Natural killer cell (primary cell): ENCODE measurements at regions of chr5 and their contacts with region 1.

Region 1: GRCh38 chr5:178732281-178732680 is 1.8 kb upstream of the ZNF354A start:
- DNase-seq: no peak
- ATAC-seq: no peak
- H3K4me3 ChIP-seq: no peak overlapping the region
- H3K4me3 Mint-ChIP-seq: no peak overlapping the region
- H3K27ac ChIP-seq: no peak overlapping the region
- H3K27ac Mint-ChIP-seq: no peak overlapping the region
- H3K4me1 ChIP-seq: peaks cover 12% of the 10 kb centered on the region
- H3K4me1 Mint-ChIP-seq: peaks cover 5 to 14% of the 10 kb centered on the region in 2 donors
- H3K27me3 ChIP-seq: no peaks in the 10 kb centered on the region
- H3K27me3 Mint-ChIP-seq: peaks cover 9 to 17% of the 10 kb centered on the region in 2 donors
- CTCF ChIP-seq: no peak

Region 2: DNA sequence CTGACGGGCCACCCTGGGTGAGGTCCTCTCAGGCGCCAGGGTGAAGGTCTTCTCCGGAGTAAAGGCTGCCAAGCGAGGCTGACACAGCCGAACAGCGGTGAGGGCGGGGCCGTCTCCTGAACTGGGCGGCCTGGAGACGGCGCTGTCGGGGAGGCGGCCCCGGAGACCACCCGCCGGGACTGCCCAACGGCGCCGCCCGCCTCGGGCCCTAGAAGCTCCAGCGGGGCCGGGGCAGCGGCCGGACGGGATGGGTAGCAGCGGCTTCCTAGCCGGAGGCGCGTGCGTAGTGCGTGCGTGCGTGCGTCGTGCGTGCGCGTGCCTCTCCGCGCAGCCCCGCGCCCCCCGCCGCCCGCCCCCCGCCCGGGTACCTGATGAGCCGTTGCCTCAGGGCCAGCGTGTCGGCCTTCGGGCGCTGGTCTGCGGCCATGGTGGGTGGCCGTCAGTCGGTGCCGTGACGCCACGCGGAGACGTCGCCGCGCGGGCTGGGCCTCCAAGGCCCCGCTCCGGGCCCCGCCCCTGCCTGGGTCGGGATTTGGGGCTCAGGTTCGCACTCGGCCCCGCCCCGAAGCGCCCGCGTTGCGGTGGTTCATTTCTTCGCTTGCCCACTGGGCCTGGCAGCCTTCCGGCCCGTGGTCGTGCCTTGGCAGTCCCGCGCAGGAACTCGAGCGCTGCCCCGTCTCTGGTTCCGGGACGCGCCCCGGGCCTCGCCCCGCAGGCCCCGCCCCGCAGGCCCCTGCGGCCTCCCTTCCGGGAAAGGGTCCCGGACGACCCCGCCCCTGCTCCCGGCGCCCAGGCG is 500.0 kb before region 1 on chr5 and contains the start of gene PHYKPL:
- intact Hi-C with region 1: loop called (anchors 10 kb)
- DNase-seq: peak; percentile 54 to 81
- ATAC-seq: peak; percentile 67 to 79 (median 70)
- H3K4me3 ChIP-seq: peak within 1 kb of the TSS; percentile 70
- H3K4me3 Mint-ChIP-seq: peak within 1 kb of the TSS; percentile 87
- H3K27ac ChIP-seq: peak within 1 kb of the TSS; percentile 75
- H3K27ac Mint-ChIP-seq: peak within 1 kb of the TSS; percentile 70 to 77
- H3K4me1 ChIP-seq: peaks cover 60% of the 10 kb centered on the region
- H3K4me1 Mint-ChIP-seq: peaks cover 67 to 68% of the 10 kb centered on the region in 2 donors
- H3K27me3 ChIP-seq: no peaks in the 10 kb centered on the region
- H3K27me3 Mint-ChIP-seq: no peaks in the 10 kb centered on the region
- CTCF ChIP-seq: no peak
- total RNA-seq, gene PHYKPL: 111 to 134 (median 131) TPM

Region 3: GRCh38 chr5:178626484-178627258 is 105.6 kb before region 1 on chr5 and contains the start of gene CLK4:
- intact Hi-C with region 1: loop called (anchors 1 kb)
- DNase-seq: peak; percentile 98
- ATAC-seq: peak; percentile 88 to 98 (median 91)
- H3K4me3 ChIP-seq: peak within 1 kb of the TSS; percentile 71
- H3K4me3 Mint-ChIP-seq: peak within 1 kb of the TSS; percentile 99
- H3K27ac ChIP-seq: peak within 1 kb of the TSS; percentile 99
- H3K27ac Mint-ChIP-seq: peak within 1 kb of the TSS; percentile 98 to 100
- H3K4me1 ChIP-seq: peaks cover 15% of the 10 kb centered on the region
- H3K4me1 Mint-ChIP-seq: peaks cover 38 to 39% of the 10 kb centered on the region in 2 donors
- H3K27me3 ChIP-seq: no peaks in the 10 kb centered on the region
- H3K27me3 Mint-ChIP-seq: no peaks in the 10 kb centered on the region
- CTCF ChIP-seq: no peak
- total RNA-seq, gene CLK4: 71.2 to 81.8 (median 78.0) TPM

Region 4: GRCh38 chr5:178699681-178700253 is 32.5 kb before region 1 on chr5:
- intact Hi-C with region 1: no loop called
- DNase-seq: no peak
- ATAC-seq: no peak
- H3K4me3 ChIP-seq: no peak overlapping the region
- H3K4me3 Mint-ChIP-seq: no peak overlapping the region
- H3K27ac ChIP-seq: no peak overlapping the region
- H3K27ac Mint-ChIP-seq: no peak overlapping the region
- H3K4me1 ChIP-seq: no peaks in the 10 kb centered on the region
- H3K4me1 Mint-ChIP-seq: no peaks in the 10 kb centered on the region
- H3K27me3 ChIP-seq: no peaks in the 10 kb centered on the region
- H3K27me3 Mint-ChIP-seq: peaks cover 0 to 8% of the 10 kb centered on the region in 2 donors
- CTCF ChIP-seq: no peak

Region 5: DNA sequence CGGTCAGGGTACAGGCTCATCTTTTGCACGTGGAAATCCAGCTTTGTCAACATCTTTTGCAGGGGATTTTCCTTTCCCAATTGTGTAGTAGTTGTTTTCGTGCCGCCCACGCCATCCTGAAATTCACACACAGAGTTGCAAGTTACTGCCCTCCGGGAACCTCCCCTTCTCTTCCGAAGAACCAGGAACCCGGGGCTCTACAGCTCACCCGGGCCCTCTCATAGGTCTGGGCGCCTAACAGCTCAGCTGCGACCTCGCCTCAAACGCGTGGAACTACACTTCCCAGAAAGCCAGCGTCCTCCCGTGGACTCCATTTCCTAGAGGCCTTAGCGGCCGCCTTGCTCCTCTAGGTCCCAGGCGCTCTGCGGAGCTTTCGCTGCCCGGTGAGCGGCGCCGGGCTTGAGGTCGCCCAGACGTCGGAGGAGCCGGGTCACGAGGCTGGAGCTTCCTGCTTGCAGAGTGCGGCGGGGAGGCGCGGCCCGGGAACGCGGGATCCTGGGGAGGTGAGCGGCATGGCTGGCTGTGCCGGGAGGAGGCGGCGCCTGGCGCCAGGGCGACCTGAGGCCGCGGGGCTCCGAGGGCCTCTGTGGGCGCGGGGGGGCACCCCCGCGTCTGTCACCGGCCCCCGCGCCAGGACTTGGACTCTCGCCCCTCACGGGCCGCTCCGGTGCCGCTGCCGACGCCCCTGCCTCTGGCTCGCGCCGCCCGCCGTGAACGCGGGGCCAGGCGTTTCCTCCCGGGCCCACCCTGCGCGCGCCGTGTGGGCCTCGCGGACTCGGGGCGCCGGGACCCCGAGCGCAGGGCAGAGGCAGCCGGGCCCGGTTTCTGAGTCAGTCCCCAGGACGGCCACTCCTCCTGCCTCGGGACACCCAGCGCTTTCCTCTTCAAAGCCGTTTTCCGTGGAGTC is 127.6 kb after region 1 on chr5 and contains the start of gene ZNF354B:
- intact Hi-C with region 1: loop called (anchors 1 kb)
- DNase-seq: peak; percentile 61 to 92
- ATAC-seq: peak; percentile 90 to 96 (median 95)
- H3K4me3 ChIP-seq: peak within 1 kb of the TSS; percentile 52
- H3K4me3 Mint-ChIP-seq: peak within 1 kb of the TSS; percentile 92
- H3K27ac ChIP-seq: peak within 1 kb of the TSS; percentile 20
- H3K27ac Mint-ChIP-seq: peak within 1 kb of the TSS; percentile 80 to 90
- H3K4me1 ChIP-seq: peaks cover 3% of the 10 kb centered on the region
- H3K4me1 Mint-ChIP-seq: peaks cover 32% of the 10 kb centered on the region in 2 donors
- H3K27me3 ChIP-seq: no peaks in the 10 kb centered on the region
- H3K27me3 Mint-ChIP-seq: no peaks in the 10 kb centered on the region
- CTCF ChIP-seq: no peak
- total RNA-seq, gene ZNF354B: 10.0 to 16.0 (median 13.6) TPM

Region 6: DNA sequence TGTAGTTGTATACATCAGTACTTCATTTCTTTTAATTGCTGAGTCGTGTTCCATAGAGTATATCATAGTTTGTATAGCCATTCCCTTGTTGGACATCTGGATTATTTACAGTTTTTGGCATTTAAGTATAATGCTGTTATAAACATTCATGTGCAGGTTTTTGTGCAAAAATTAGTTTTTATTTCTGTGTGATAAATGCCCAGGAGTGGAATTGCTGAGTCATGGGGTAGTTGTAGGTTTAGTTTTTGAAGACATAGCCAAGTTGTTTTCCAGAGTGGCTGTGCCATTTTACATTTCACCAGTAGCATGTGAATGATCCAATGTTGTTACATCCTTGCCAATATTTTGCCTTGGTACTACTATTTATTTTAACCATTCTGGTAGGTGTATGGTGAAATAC is 140.0 kb after region 1 on chr5:
- intact Hi-C with region 1: no loop called
- DNase-seq: no peak
- ATAC-seq: no peak
- H3K4me3 ChIP-seq: no peak overlapping the region
- H3K4me3 Mint-ChIP-seq: no peak overlapping the region
- H3K27ac ChIP-seq: no peak overlapping the region
- H3K27ac Mint-ChIP-seq: peak overlapping the region in 1 of 2 donors; percentile 2
- H3K4me1 ChIP-seq: no peaks in the 10 kb centered on the region
- H3K4me1 Mint-ChIP-seq: peaks cover 8 to 37% of the 10 kb centered on the region in 2 donors
- H3K27me3 ChIP-seq: no peaks in the 10 kb centered on the region
- H3K27me3 Mint-ChIP-seq: no peaks in the 10 kb centered on the region
- CTCF ChIP-seq: no peak

Region 7: DNA sequence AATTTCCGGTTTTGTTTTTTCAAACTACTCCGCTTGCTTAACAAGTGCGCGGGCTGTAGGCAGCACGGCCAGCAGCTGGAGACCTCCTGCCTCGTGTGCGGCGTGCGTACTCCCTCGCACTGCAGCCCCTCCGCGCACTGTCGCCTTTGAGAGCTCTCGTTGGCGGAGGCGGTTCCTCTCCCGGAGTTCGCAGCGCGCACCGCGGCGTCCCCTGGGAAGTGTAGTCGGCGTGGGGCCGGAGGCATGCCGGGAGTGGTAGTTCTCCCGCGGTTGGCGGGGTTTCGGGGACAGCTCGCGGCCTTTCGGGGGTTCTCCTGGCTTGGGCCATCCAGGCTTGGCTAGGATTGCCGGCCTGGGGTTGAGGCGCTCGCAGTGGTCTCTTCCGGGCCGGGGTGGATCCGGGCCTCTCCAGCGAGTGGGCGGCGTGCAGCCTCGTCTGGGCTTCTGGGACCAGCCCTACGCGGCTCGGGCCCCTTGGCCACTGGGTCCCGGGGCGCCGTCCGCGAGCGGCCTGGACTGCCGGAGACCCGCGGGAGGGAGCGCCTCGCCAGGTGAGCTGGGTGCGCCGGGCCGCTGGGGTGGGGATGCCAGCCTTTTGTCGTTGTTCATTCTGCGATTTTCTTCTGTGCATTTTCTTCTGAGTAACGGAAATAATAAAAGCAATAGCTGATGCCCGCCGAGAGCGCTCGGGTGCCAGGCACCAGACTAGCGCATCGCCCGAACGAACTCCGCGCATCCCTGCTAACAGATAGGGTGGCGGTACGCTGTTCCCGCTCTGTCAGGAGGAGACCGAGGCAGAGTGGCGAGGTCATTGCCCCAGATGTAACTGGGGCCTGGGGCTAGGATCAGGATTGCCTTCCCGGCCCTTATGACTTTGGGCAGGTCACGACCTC is 328.1 kb after region 1 on chr5 and contains the start of gene ZNF354C:
- intact Hi-C with region 1: loop called (anchors 1 kb)
- DNase-seq: peak; percentile 81 to 89
- ATAC-seq: peak; percentile 94 to 98 (median 97)
- H3K4me3 ChIP-seq: peak within 1 kb of the TSS; percentile 71
- H3K4me3 Mint-ChIP-seq: peak within 1 kb of the TSS; percentile 96
- H3K27ac ChIP-seq: peak within 1 kb of the TSS; percentile 70
- H3K27ac Mint-ChIP-seq: peak within 1 kb of the TSS; percentile 87 to 91
- H3K4me1 ChIP-seq: peaks cover 15% of the 10 kb centered on the region
- H3K4me1 Mint-ChIP-seq: peaks cover 33 to 41% of the 10 kb centered on the region in 2 donors
- H3K27me3 ChIP-seq: no peaks in the 10 kb centered on the region
- H3K27me3 Mint-ChIP-seq: peaks cover 7 to 13% of the 10 kb centered on the region in 2 donors
- CTCF ChIP-seq: no peak
- total RNA-seq, gene ZNF354C: 4.0 to 7.4 (median 4.9) TPM